ENCODE measurements at regions of chr15 and their contacts with region 1.

Region 1: DNA sequence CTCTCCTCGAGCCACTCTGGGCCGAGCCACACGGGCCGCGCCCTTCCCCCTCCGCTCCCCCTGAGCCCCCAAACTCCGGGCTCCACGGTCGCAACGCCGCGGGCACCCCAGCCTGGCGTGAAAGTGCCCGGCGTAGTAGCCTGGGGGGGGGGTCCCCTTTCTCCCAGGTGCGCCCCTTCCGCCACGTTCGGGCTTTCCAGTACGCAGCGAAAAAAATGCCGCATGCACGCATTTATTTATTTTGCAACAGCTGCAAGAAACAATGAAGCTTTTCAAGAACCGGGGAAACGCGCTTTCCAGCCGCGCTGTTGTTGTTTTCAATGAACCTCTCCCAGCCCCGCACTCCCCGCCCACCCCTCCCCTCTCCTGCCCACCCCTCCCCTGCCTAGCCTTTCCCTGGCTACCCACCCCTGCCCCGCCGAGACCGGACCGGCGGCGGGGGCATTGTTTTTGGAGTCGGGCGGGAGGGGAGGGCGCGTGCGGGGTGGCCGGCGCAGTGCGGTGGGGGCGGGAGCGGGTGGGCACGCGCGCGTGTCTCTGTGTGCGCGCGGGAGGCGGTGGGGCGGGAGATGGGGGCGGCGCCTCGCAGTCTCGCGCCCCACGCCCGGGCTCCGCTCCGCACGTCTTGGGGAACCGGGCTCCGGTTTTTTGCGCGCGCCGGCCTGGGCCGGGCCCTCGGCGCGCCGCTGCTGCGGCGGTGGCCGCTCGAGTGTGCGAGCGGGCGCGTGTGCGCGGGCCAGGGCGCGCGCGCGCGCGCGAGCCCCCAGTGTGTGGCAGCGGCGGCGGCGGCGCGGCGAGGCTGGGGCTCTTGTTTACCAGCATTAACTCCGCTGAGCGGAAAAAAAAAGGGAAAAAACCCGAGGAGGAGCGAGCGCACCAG is at the start of gene IGF1R:
- DNase-seq: peak; percentile 87 to 98 (median 94)
- ATAC-seq: peak; percentile 86
- H3K4me3 ChIP-seq: peak within 1 kb of the TSS; percentile 74
- H3K4me3 Mint-ChIP-seq: peak within 1 kb of the TSS; percentile 83 to 98 (median 92)
- H3K27ac ChIP-seq: peak within 1 kb of the TSS; percentile 82
- H3K27ac Mint-ChIP-seq: peak within 1 kb of the TSS; percentile 89 to 97 (median 93)
- H3K4me1 ChIP-seq: peaks cover 0 to 11% of the 10 kb centered on the region in 2 donors
- H3K4me1 Mint-ChIP-seq: peaks cover 14 to 41% (median 29%) of the 10 kb centered on the region in 7 donors
- H3K27me3 ChIP-seq: peaks cover 0 to 16% of the 10 kb centered on the region in 2 donors
- H3K27me3 Mint-ChIP-seq: peaks cover 0 to 58% (median 0%) of the 10 kb centered on the region in 5 donors
- total RNA-seq, gene IGF1R: 37.4 to 167 (median 124) TPM

Region 2: DNA sequence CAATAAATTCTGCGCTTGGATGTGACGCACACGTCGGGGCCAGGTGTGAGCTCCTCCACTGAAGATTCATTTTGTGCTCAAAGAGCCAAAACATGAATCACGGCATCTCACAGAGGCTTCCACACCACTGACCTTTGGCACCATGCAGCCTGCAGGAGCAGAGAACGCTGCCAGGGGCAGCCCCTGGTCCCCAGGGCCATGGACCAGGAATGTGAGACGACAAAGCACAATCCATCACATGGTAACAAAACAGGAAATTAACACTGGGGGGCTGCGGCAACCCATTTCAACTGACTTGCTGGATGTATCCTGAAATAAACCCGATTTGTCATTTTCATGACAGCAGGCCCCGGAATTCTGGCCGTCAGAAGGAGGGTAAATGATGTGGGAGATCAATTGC is 167.2 kb before region 1 on chr15:
- CTCF ChIA-PET with region 1: no interaction called
- POLR2A ChIA-PET with region 1: no interaction called
- intact Hi-C with region 1: no loop called
- DNase-seq: no peak
- ATAC-seq: no peak
- H3K4me3 ChIP-seq: no peak overlapping the region
- H3K4me3 Mint-ChIP-seq: no peak overlapping the region
- H3K27ac ChIP-seq: no peak overlapping the region
- H3K27ac Mint-ChIP-seq: no peak overlapping the region
- H3K4me1 ChIP-seq: no peaks in the 10 kb centered on the region
- H3K4me1 Mint-ChIP-seq: no peaks in the 10 kb centered on the region
- H3K27me3 ChIP-seq: no peaks in the 10 kb centered on the region
- H3K27me3 Mint-ChIP-seq: peaks cover 0 to 33% (median 31%) of the 10 kb centered on the region in 5 donors

Region 3: GRCh38 chr15:98518823-98519561 is 129.0 kb before region 1 on chr15:
- CTCF ChIA-PET with region 1: interaction called, 16 read pairs
- POLR2A ChIA-PET with region 1: interaction called, 6 read pairs
- intact Hi-C with region 1: loop called (anchors 1 kb)
- DNase-seq: peak; percentile 16 to 70 (median 52)
- ATAC-seq: peak; percentile 85
- H3K4me3 ChIP-seq: no peak overlapping the region
- H3K4me3 Mint-ChIP-seq: no peak overlapping the region
- H3K27ac ChIP-seq: no peak overlapping the region
- H3K27ac Mint-ChIP-seq: peak overlapping the region in 1 of 9 donors; percentile 13
- H3K4me1 ChIP-seq: no peaks in the 10 kb centered on the region
- H3K4me1 Mint-ChIP-seq: peaks cover 0 to 8% (median 6%) of the 10 kb centered on the region in 7 donors
- H3K27me3 ChIP-seq: no peaks in the 10 kb centered on the region
- H3K27me3 Mint-ChIP-seq: peaks cover 0 to 7% (median 5%) of the 10 kb centered on the region in 5 donors

Region 4: DNA sequence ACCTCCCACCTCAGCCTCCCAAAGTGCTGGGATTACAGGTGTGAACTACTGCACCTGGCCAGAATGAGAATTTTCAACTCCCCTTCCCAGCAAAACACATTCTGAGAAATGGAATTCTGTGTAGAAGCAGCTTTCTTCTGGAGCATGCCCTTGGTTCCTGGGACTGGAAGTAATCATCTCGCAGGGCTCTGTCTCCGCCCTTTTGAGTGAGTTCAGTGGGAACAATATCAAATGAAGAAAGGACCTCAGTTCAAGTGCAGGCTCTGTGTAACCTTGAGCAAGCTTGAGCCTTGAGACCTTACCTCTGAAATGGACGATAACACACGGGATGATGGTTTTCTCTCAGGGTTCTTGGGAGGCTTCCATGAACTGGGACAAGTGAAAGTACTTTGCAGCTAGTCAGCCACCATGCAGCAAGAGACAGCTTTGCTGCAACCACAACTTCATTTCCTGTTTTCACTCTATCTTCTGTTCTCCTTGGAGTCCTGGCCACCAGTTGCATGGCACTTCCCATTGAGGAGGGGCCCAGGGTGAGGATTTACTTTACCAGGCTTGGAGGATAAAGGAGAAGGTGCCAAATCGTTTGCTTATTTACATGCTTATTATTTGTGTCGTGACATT is 35.4 kb before region 1 on chr15:
- CTCF ChIA-PET with region 1: interaction called, 3 read pairs
- POLR2A ChIA-PET with region 1: interaction called, 26 read pairs
- intact Hi-C with region 1: no loop called
- DNase-seq: peak in 5 of 9 donors; percentile 14 to 34 (median 27)
- ATAC-seq: peak; percentile 42
- H3K4me3 ChIP-seq: peak overlapping the region; percentile 37
- H3K4me3 Mint-ChIP-seq: peak overlapping the region; percentile 58 to 84 (median 74)
- H3K27ac ChIP-seq: peak overlapping the region; percentile 0
- H3K27ac Mint-ChIP-seq: peak overlapping the region; percentile 34 to 92 (median 78)
- H3K4me1 ChIP-seq: peaks cover 0 to 14% of the 10 kb centered on the region in 2 donors
- H3K4me1 Mint-ChIP-seq: peaks cover 5 to 19% (median 12%) of the 10 kb centered on the region in 7 donors
- H3K27me3 ChIP-seq: no peaks in the 10 kb centered on the region
- H3K27me3 Mint-ChIP-seq: peaks cover 0 to 14% (median 0%) of the 10 kb centered on the region in 5 donors

Region 5: GRCh38 chr15:98779463-98780071 is 131.6 kb after region 1 on chr15:
- CTCF ChIA-PET with region 1: interaction called, 5 read pairs
- POLR2A ChIA-PET with region 1: no interaction called
- intact Hi-C with region 1: loop called (anchors 2 kb)
- DNase-seq: peak; percentile 44 to 75 (median 64)
- ATAC-seq: peak; percentile 94
- H3K4me3 ChIP-seq: no peak overlapping the region
- H3K4me3 Mint-ChIP-seq: peak overlapping the region; percentile 43 to 75 (median 64)
- H3K27ac ChIP-seq: no peak overlapping the region
- H3K27ac Mint-ChIP-seq: peak overlapping the region in 4 of 9 donors; percentile 56 to 78 (median 70)
- H3K4me1 ChIP-seq: peaks cover 0 to 21% of the 10 kb centered on the region in 2 donors
- H3K4me1 Mint-ChIP-seq: peaks cover 26 to 80% (median 62%) of the 10 kb centered on the region in 7 donors
- H3K27me3 ChIP-seq: no peaks in the 10 kb centered on the region
- H3K27me3 Mint-ChIP-seq: peaks cover 0 to 3% (median 0%) of the 10 kb centered on the region in 5 donors

Region 6: DNA sequence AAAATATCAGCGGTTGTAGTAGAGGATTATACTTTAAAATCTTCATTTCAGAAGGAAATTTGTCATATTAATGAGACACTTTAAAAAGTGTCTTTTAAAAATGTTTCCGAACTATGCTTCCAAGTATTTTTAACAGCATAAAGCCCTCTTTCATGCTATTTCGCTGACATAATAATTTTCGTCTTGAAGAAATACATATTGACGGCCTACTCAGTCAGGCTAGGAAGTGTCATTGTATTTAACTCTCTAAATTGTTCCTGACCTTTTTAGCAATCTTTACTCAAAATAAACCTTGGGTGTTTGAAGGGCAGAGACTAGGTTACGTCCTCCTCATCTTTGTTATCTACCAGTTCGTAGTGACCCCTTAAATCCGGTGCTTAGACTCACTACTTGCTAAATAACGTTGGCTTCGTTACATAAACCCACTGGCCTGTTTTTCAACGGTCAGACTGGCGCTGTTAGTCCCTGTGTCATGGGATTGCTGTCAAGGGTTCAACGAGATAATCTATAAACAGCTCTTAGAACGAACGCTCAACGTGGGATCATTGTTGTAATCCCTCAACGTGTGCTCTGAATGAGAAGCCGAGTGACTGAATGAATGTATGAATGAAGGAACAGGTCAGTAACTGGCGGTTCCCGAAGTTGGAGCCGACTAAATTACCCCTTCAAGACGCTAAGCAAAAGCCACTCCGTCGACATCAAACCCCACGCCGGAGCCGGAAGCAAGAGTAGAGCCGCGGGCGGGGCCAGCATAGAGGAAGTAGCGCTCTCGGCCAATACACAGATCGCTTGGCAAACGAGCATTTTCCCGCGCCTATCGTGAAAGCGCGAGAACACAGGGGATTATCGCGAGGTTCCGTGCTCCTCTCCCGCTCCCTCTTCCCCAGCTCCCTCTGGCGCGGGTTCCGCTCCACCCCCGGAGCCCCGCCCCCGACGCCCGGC is 602.8 kb after region 1 on chr15:
- CTCF ChIA-PET with region 1: no interaction called
- POLR2A ChIA-PET with region 1: no interaction called
- intact Hi-C with region 1: loop called (anchors 1 kb)
- DNase-seq: peak; percentile 78 to 95 (median 92)
- ATAC-seq: peak; percentile 96
- H3K4me3 ChIP-seq: peak overlapping the region; percentile 76
- H3K4me3 Mint-ChIP-seq: peak overlapping the region in 8 of 10 donors; percentile 81 to 95 (median 92)
- H3K27ac ChIP-seq: peak overlapping the region; percentile 65
- H3K27ac Mint-ChIP-seq: peak overlapping the region; percentile 83 to 92 (median 90)
- H3K4me1 ChIP-seq: peaks cover 14 to 28% of the 10 kb centered on the region in 2 donors
- H3K4me1 Mint-ChIP-seq: peaks cover 24 to 32% (median 27%) of the 10 kb centered on the region in 7 donors
- H3K27me3 ChIP-seq: no peaks in the 10 kb centered on the region
- H3K27me3 Mint-ChIP-seq: no peaks in the 10 kb centered on the region

Region 7: DNA sequence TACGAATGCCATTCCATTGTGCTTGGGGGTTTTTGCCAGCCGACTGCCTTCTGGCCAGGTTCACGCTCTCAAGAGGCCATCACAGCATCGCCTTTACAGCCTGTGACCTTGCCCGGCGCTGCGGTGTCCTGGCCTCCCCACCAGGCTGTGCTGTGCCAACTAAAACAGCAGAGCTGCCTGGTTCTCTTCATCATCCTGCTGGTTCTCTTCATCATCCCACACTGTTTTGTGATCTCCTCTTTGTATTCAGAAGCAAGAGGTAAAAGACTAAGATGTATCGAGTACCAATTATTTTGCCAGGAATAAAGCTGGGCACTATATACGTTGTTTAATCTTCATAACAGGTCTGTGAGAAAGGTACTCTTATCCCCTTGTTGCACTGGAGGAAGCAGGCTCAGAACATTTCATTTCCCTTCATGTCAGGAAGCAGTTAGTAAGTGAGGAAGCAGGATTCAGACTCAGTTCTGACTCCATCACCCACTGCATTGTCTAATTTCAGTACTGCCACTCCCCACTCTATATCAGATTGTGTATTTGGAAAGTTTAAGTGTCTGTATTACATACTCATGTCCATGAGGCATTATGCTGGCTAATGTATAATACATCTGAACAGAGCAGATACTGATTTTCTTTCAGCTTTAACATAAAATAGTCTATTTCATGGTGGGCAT is 696.0 kb after region 1 on chr15:
- CTCF ChIA-PET with region 1: no interaction called
- POLR2A ChIA-PET with region 1: no interaction called
- intact Hi-C with region 1: no loop called
- DNase-seq: peak; percentile 9 to 68 (median 57)
- ATAC-seq: peak; percentile 73
- H3K4me3 ChIP-seq: no peak overlapping the region
- H3K4me3 Mint-ChIP-seq: no peak overlapping the region
- H3K27ac ChIP-seq: no peak overlapping the region
- H3K27ac Mint-ChIP-seq: peak overlapping the region in 2 of 9 donors; percentile 8 to 61
- H3K4me1 ChIP-seq: no peaks in the 10 kb centered on the region
- H3K4me1 Mint-ChIP-seq: peaks cover 0 to 8% (median 6%) of the 10 kb centered on the region in 7 donors
- H3K27me3 ChIP-seq: no peaks in the 10 kb centered on the region
- H3K27me3 Mint-ChIP-seq: no peaks in the 10 kb centered on the region

Region 8: DNA sequence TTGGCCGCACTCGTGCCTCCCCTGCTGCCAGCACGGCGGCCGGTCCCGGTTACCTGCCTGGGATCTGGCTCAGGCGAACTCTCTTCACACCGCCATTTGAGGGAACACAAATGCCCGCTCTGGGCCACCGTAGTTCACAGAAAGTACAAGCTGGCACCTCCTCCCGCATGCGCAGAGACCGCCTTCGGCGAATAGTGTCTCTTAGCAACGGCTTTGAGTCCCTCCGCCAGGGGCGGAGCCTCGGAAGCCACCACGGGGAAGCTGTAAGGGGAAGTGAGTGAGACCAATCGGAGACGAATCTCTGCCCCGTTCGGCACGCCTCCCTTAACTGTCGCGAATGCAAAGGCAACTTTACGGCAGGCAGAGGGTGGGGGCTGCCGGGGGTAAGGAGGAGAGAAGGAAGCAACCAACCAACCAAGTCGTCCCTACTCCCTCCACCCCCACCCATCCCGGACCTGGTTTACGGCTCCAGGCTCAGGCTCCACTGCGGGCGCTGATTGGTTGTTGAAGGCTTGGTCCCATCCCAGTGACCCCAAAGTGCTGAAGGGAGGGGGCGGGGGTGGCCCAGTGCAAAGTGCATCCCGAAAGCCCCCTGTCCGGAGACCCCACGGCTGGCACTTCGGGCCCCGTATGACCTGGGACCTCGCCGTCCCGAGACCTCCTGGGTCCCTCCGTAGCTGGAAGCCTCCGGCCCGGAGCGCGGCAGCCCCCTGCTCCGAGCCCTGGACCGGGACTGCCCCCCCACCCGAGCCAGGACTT is 1954.2 kb after region 1 on chr15 and contains the starts of genes ASB7 and LINS1:
- CTCF ChIA-PET with region 1: no interaction called
- POLR2A ChIA-PET with region 1: no interaction called
- intact Hi-C with region 1: loop called (anchors 5 kb)
- DNase-seq: peak; percentile 97 to 100 (median 100)
- ATAC-seq: peak; percentile 97
- H3K4me3 ChIP-seq: peak within 1 kb of the TSS; percentile 97
- H3K4me3 Mint-ChIP-seq: no peak within 1 kb of the TSS
- H3K27ac ChIP-seq: peak within 1 kb of the TSS; percentile 91
- H3K27ac Mint-ChIP-seq: peak within 1 kb of the TSS in 6 of 9 donors; percentile 50 to 95 (median 85)
- H3K4me1 ChIP-seq: peaks cover 35 to 52% of the 10 kb centered on the region in 2 donors
- H3K4me1 Mint-ChIP-seq: peaks cover 32 to 68% (median 41%) of the 10 kb centered on the region in 7 donors
- H3K27me3 ChIP-seq: no peaks in the 10 kb centered on the region
- H3K27me3 Mint-ChIP-seq: no peaks in the 10 kb centered on the region
- total RNA-seq, gene ASB7: 15.4 to 27.2 (median 18.9) TPM
- total RNA-seq, gene LINS1: 50.7 to 116 (median 76.9) TPM